Caco-2 (cell line): ENCODE measurements at regions of chr3 and their contacts with region 1.

Region 1: GRCh38 chr3:36606871-36607765 is 157.2 kb downstream of the DCLK3 start:
- DNase-seq: peak; percentile 39 to 45
- H3K4me3 ChIP-seq: no peak overlapping the region
- H3K4me3 Mint-ChIP-seq: no peak overlapping the region
- H3K27ac Mint-ChIP-seq: no peak overlapping the region
- H3K4me1 ChIP-seq: peaks cover 7% of the 10 kb centered on the region; the same call in 1 of the 2 replicates
- H3K4me1 Mint-ChIP-seq: peaks cover 20% of the 10 kb centered on the region
- H3K27me3 ChIP-seq: no peaks in the 10 kb centered on the region
- H3K27me3 Mint-ChIP-seq: peaks cover 23% of the 10 kb centered on the region
- CTCF ChIP-seq: no peak

Region 2: DNA sequence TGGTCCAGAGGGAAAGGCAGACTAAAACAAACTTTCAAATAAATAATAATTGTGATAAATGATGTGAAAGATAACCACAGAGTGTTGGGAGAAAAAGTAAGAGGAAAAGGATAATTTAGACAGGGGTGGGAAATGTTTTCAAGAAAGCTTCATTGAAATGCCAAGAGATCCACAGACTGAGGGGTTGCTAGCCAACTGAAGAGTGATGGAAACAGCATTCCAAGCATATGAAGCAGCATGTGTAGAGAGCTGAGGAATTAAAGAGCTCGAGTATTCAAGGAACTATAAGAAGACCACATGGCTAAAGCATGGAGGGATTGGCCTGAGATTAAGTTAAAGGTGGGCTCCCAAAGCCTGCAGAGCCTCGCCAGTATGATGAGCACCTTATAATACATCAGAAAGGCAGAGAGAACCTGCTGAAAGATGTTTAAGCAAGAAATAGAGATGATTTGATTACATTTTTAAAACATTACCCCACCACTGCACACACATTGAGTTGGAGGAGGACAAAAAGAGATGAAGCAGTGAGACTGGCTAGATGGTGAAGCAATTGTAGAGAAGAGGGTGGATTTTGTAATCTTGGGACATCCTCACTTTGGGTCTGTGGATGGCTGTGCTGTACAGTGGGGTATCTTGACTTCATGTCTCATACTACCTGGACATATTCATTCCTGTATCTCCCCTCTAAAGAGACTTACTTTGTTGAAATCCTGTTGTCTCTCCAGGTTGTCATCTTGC is 126.0 kb before region 1 on chr3:
- CTCF ChIA-PET with region 1: no interaction called
- POLR2A ChIA-PET with region 1: no interaction called
- intact Hi-C with region 1: no loop called
- DNase-seq: no peak
- H3K4me3 ChIP-seq: no peak overlapping the region
- H3K4me3 Mint-ChIP-seq: no peak overlapping the region
- H3K27ac Mint-ChIP-seq: no peak overlapping the region
- H3K4me1 ChIP-seq: no peaks in the 10 kb centered on the region
- H3K4me1 Mint-ChIP-seq: peaks cover under 1% of the 10 kb centered on the region
- H3K27me3 ChIP-seq: no peaks in the 10 kb centered on the region
- H3K27me3 Mint-ChIP-seq: peaks cover 7% of the 10 kb centered on the region
- CTCF ChIP-seq: no peak

Region 3: GRCh38 chr3:36560685-36561084 is 46.4 kb before region 1 on chr3:
- CTCF ChIA-PET with region 1: no interaction called
- POLR2A ChIA-PET with region 1: no interaction called
- intact Hi-C with region 1: loop called (anchors 2 kb)
- DNase-seq: no peak
- H3K4me3 ChIP-seq: no peak overlapping the region
- H3K4me3 Mint-ChIP-seq: no peak overlapping the region
- H3K27ac Mint-ChIP-seq: peak overlapping the region; percentile 35
- H3K4me1 ChIP-seq: peaks cover 23% of the 10 kb centered on the region
- H3K4me1 Mint-ChIP-seq: peaks cover 19% of the 10 kb centered on the region
- H3K27me3 ChIP-seq: no peaks in the 10 kb centered on the region
- H3K27me3 Mint-ChIP-seq: no peaks in the 10 kb centered on the region
- CTCF ChIP-seq: no peak

Region 4: GRCh38 chr3:36648241-36649034 is 41.3 kb after region 1 on chr3:
- CTCF ChIA-PET with region 1: no interaction called
- POLR2A ChIA-PET with region 1: no interaction called
- intact Hi-C with region 1: loop called (anchors 1 kb)
- DNase-seq: peak in 1 of 2 experiments; percentile 37
- H3K4me3 ChIP-seq: no peak overlapping the region
- H3K4me3 Mint-ChIP-seq: no peak overlapping the region
- H3K27ac Mint-ChIP-seq: peak overlapping the region; percentile 9
- H3K4me1 ChIP-seq: peaks cover 14% of the 10 kb centered on the region; the same call in 1 of the 2 replicates
- H3K4me1 Mint-ChIP-seq: peaks cover 18% of the 10 kb centered on the region
- H3K27me3 ChIP-seq: no peaks in the 10 kb centered on the region
- H3K27me3 Mint-ChIP-seq: no peaks in the 10 kb centered on the region
- CTCF ChIP-seq: no peak

Region 5: GRCh38 chr3:36677331-36678007 is 70.4 kb after region 1 on chr3:
- CTCF ChIA-PET with region 1: no interaction called
- POLR2A ChIA-PET with region 1: no interaction called
- intact Hi-C with region 1: loop called (anchors 1 kb)
- DNase-seq: peak; percentile 51 to 61
- H3K4me3 ChIP-seq: no peak overlapping the region
- H3K4me3 Mint-ChIP-seq: no peak overlapping the region
- H3K27ac Mint-ChIP-seq: peak overlapping the region; percentile 32
- H3K4me1 ChIP-seq: no peaks in the 10 kb centered on the region
- H3K4me1 Mint-ChIP-seq: peaks cover 8% of the 10 kb centered on the region
- H3K27me3 ChIP-seq: no peaks in the 10 kb centered on the region
- H3K27me3 Mint-ChIP-seq: no peaks in the 10 kb centered on the region
- CTCF ChIP-seq: no peak